AG04449 (cell line): ENCODE measurements at regions of chr1 and their contacts with region 1.

Region 1: GRCh38 chr1:222739465-222739864 is 2.5 kb downstream of the FAM177B start:
- DNase-seq: no peak
- H3K4me3 ChIP-seq: no peak overlapping the region
- CTCF ChIP-seq: no peak

Region 2: DNA sequence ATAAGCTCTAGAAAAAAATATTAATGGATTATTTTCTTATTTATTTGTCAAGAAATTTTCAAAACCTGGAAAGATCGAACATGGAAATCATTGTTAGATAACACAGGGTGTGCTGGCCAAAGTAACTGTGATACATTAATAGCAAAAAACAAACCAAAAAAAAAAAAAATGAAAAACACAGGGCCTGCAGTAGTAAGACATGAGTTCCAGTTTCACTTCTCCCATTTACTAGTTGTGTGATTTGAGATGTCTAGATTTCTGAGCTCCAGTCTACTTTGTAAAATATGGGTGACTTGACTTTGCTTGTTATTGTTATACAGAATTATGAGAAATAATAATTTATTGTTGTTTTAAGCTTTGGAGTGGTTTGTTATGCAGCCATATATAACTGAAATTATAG is 11.2 kb after region 1 on chr1:
- CTCF ChIA-PET with region 1: interaction called, 20 read pairs
- POLR2A ChIA-PET with region 1: no interaction called
- DNase-seq: no peak
- H3K4me3 ChIP-seq: no peak overlapping the region
- CTCF ChIP-seq: no peak

Region 3: DNA sequence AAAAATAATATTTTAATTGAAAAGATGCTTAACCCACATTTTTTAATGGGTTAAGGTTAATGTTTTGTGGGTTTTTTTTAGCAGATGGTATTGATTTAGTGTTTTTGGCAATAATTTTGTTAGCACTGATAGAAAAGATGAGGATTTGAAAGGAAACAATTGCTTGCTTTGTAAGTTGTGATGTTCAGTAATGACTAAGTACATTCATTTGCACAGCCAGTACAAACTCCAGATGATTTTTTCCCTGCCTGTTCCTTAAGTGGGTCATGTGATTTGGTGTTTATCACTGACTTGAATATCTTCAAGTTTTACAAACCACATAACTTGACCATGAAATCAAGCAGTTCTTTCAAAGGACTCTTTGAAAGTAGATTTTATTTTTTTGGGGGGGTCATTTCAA is 90.4 kb after region 1 on chr1:
- CTCF ChIA-PET with region 1: no interaction called
- POLR2A ChIA-PET with region 1: no interaction called
- DNase-seq: peak; percentile 31
- H3K4me3 ChIP-seq: no peak overlapping the region
- CTCF ChIP-seq: no peak

Region 4: GRCh38 chr1:222861062-222861461 is 121.6 kb after region 1 on chr1:
- CTCF ChIA-PET with region 1: no interaction called
- POLR2A ChIA-PET with region 1: no interaction called
- DNase-seq: no peak
- H3K4me3 ChIP-seq: no peak overlapping the region
- CTCF ChIP-seq: no peak

Region 5: GRCh38 chr1:222880586-222880985 is 141.1 kb after region 1 on chr1:
- CTCF ChIA-PET with region 1: no interaction called
- POLR2A ChIA-PET with region 1: no interaction called
- DNase-seq: no peak
- H3K4me3 ChIP-seq: no peak overlapping the region
- CTCF ChIP-seq: no peak

Region 6: GRCh38 chr1:223755992-223756775 is 1016.7 kb after region 1 on chr1:
- CTCF ChIA-PET with region 1: no interaction called
- POLR2A ChIA-PET with region 1: no interaction called
- DNase-seq: no peak
- H3K4me3 ChIP-seq: no peak overlapping the region
- CTCF ChIP-seq: no peak